ENCODE measurements at regions of chr19 and their contacts with region 1.

Region 1: GRCh38 chr19:41883821-41884733 is 1.1 kb downstream of the ARHGEF1 start:
- DNase-seq: peak; percentile 95
- ATAC-seq: peak; percentile 78
- H3K4me3 ChIP-seq: peak overlapping the region; percentile 83 to 100 (median 97)
- H3K4me3 Mint-ChIP-seq: peak overlapping the region; percentile 93
- H3K27ac ChIP-seq: peak overlapping the region; percentile 72 to 87
- H3K27ac Mint-ChIP-seq: peak overlapping the region; percentile 98
- H3K4me1 ChIP-seq: peaks cover 72 to 83% of the 10 kb centered on the region in 2 donors
- H3K4me1 Mint-ChIP-seq: peaks cover 78% of the 10 kb centered on the region
- H3K27me3 ChIP-seq: no peaks in the 10 kb centered on the region
- H3K27me3 Mint-ChIP-seq: no peaks in the 10 kb centered on the region
- CTCF ChIP-seq: no peak

Region 2: DNA sequence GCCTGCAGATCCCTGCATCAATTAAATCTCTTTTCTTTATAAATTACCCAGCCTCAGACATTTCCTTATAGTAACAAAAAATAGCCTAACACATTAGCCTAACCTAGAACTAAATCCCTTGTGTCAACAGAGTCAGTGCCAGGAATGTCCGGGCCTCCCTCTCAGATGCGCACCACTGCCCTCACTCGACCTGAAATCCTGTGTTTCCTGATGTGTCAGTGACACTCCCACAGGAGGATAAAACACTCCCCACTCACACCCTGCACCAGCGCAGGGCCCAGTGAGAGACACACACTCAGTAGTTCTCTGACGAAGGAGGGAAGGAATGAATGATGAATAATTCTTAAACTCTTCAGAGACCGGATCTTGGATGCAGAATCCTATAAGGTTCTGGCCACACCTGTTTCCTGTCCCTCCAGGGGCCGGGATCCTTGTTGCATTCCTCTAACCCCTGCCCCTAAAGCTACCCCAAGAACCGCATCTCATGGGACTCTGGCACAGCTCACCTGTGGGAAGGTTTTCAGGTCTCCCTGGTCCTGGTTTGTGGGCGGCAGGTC is 84.6 kb before region 1 on chr19:
- CTCF ChIA-PET with region 1: no interaction called
- POLR2A ChIA-PET with region 1: no interaction called
- intact Hi-C with region 1: no loop called
- DNase-seq: no peak
- ATAC-seq: no peak
- H3K4me3 ChIP-seq: peak overlapping the region in 1 of 5 experiments; percentile 21
- H3K4me3 Mint-ChIP-seq: no peak overlapping the region
- H3K27ac ChIP-seq: no peak overlapping the region
- H3K27ac Mint-ChIP-seq: peak overlapping the region; percentile 50
- H3K4me1 ChIP-seq: peaks cover 30 to 34% of the 10 kb centered on the region in 2 donors
- H3K4me1 Mint-ChIP-seq: peaks cover 35% of the 10 kb centered on the region
- H3K27me3 ChIP-seq: peaks cover 0 to 3% (median 0%) of the 10 kb centered on the region in 4 experiments
- H3K27me3 Mint-ChIP-seq: peaks cover 3% of the 10 kb centered on the region
- CTCF ChIP-seq: no peak

Region 3: GRCh38 chr19:41866284-41866683 is 17.8 kb before region 1 on chr19:
- CTCF ChIA-PET with region 1: interaction called, 180 read pairs
- POLR2A ChIA-PET with region 1: interaction called, 85 read pairs
- intact Hi-C with region 1: no loop called
- DNase-seq: no peak
- ATAC-seq: no peak
- H3K4me3 ChIP-seq: no peak overlapping the region
- H3K4me3 Mint-ChIP-seq: no peak overlapping the region
- H3K27ac ChIP-seq: peak overlapping the region in 1 of 2 donors; percentile 26
- H3K27ac Mint-ChIP-seq: peak overlapping the region; percentile 76
- H3K4me1 ChIP-seq: peaks cover 46 to 88% of the 10 kb centered on the region in 2 donors
- H3K4me1 Mint-ChIP-seq: peaks cover 71% of the 10 kb centered on the region
- H3K27me3 ChIP-seq: no peaks in the 10 kb centered on the region
- H3K27me3 Mint-ChIP-seq: no peaks in the 10 kb centered on the region
- CTCF ChIP-seq: no peak

Region 4: DNA sequence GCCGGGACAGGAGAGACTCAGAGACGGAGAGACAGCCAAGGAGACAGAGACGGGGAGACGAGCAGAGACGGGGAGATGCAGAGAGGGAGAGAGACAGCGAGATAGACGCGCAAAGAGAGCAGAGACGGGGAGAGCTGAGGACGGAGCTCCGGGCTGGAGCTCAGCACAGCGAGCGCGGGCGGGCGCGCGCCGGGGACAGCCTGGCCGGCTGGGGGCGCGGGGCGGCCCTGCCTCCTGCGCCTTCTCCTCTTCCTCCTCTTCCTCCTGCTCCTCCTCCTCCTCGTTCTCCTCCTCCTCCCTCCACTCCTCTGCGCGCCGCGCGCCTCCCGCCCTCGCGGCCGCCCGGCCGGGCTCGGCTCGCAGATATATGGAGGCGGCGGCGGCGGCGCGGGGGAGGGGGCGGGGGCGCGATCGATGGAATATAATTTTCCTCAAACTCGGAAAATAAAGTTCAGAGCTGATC is 44.2 kb after region 1 on chr19 and contains the start of gene ERFL:
- CTCF ChIA-PET with region 1: interaction called, 14 read pairs
- POLR2A ChIA-PET with region 1: interaction called, 4 read pairs
- intact Hi-C with region 1: no loop called
- DNase-seq: peak; percentile 59
- ATAC-seq: peak; percentile 31
- H3K4me3 ChIP-seq: peak within 1 kb of the TSS; percentile 49 to 72 (median 60)
- H3K4me3 Mint-ChIP-seq: no peak within 1 kb of the TSS
- H3K27ac ChIP-seq: peak within 1 kb of the TSS; percentile 18 to 56
- H3K27ac Mint-ChIP-seq: peak within 1 kb of the TSS; percentile 87
- H3K4me1 ChIP-seq: peaks cover 52 to 60% of the 10 kb centered on the region in 2 donors
- H3K4me1 Mint-ChIP-seq: peaks cover 32% of the 10 kb centered on the region
- H3K27me3 ChIP-seq: peaks cover 0 to 36% (median 7%) of the 10 kb centered on the region in 4 experiments
- H3K27me3 Mint-ChIP-seq: peaks cover 7% of the 10 kb centered on the region
- CTCF ChIP-seq: no peak
- total RNA-seq, gene ERFL: 2.3 and 2.4 TPM in 2 replicates

Region 5: DNA sequence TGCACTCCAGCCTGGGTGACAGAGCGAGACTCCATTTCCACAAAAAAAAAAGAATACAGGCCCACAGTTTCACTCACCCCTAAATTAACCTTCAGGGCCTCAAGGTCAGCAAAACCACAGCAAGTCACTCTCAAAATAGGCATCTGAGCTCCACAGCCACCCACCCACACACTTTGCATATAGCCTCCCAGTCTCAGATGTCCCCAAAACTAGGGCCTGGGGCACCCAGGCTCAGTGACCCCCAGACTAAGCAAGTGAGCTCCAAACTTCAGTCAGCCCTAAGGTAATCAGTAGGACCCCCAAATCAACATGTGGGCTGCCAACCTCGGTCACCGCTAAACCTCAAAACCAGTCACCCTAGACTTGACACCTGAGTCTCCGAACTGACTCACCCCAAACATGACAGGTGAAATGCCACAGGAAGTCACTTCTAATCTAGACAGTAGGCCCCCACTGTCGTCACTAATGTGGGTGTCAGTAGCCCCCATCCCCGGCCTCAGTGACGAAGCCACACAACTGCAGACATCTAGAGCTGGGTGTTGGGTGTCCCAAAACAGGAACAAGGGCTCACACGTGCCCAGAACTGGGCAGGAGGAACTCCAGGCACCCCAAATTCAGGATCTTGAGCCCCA is 61.2 kb after region 1 on chr19:
- CTCF ChIA-PET with region 1: interaction called, 40 read pairs
- POLR2A ChIA-PET with region 1: interaction called, 22 read pairs
- intact Hi-C with region 1: loop called (anchors 1 kb)
- DNase-seq: peak; percentile 97
- ATAC-seq: peak; percentile 87
- H3K4me3 ChIP-seq: peak overlapping the region in 1 of 5 experiments; percentile 23
- H3K4me3 Mint-ChIP-seq: peak overlapping the region; percentile 81
- H3K27ac ChIP-seq: peak overlapping the region; percentile 94 to 96
- H3K27ac Mint-ChIP-seq: peak overlapping the region; percentile 100
- H3K4me1 ChIP-seq: peaks cover 57 to 71% of the 10 kb centered on the region in 2 donors
- H3K4me1 Mint-ChIP-seq: peaks cover 71% of the 10 kb centered on the region
- H3K27me3 ChIP-seq: no peaks in the 10 kb centered on the region
- H3K27me3 Mint-ChIP-seq: no peaks in the 10 kb centered on the region
- CTCF ChIP-seq: no peak

Region 6: GRCh38 chr19:41951686-41952172 is 67.7 kb after region 1 on chr19:
- CTCF ChIA-PET with region 1: interaction called, 40 read pairs
- POLR2A ChIA-PET with region 1: interaction called, 21 read pairs
- intact Hi-C with region 1: no loop called
- DNase-seq: peak; percentile 88
- ATAC-seq: peak; percentile 94
- H3K4me3 ChIP-seq: no peak overlapping the region
- H3K4me3 Mint-ChIP-seq: no peak overlapping the region
- H3K27ac ChIP-seq: no peak overlapping the region
- H3K27ac Mint-ChIP-seq: peak overlapping the region; percentile 74
- H3K4me1 ChIP-seq: peaks cover 14 to 23% of the 10 kb centered on the region in 2 donors
- H3K4me1 Mint-ChIP-seq: peaks cover 33% of the 10 kb centered on the region
- H3K27me3 ChIP-seq: no peaks in the 10 kb centered on the region
- H3K27me3 Mint-ChIP-seq: no peaks in the 10 kb centered on the region
- CTCF ChIP-seq: peak; percentile 99

Region 7: GRCh38 chr19:42075616-42076379 is 191.7 kb after region 1 on chr19 and contains the start of gene ZNF574:
- CTCF ChIA-PET with region 1: no interaction called
- POLR2A ChIA-PET with region 1: no interaction called
- intact Hi-C with region 1: loop called (anchors 5 kb)
- DNase-seq: peak; percentile 100
- ATAC-seq: peak; percentile 94
- H3K4me3 ChIP-seq: peak within 1 kb of the TSS; percentile 56 to 93 (median 86)
- H3K4me3 Mint-ChIP-seq: peak within 1 kb of the TSS; percentile 97
- H3K27ac ChIP-seq: peak within 1 kb of the TSS; percentile 95 to 99
- H3K27ac Mint-ChIP-seq: peak within 1 kb of the TSS; percentile 99
- H3K4me1 ChIP-seq: peaks cover 20 to 23% of the 10 kb centered on the region in 2 donors
- H3K4me1 Mint-ChIP-seq: peaks cover 35% of the 10 kb centered on the region
- H3K27me3 ChIP-seq: no peaks in the 10 kb centered on the region
- H3K27me3 Mint-ChIP-seq: peaks cover 5% of the 10 kb centered on the region
- CTCF ChIP-seq: no peak
- total RNA-seq, gene ZNF574: 27.4 and 28.4 TPM in 2 replicates

Measured in B cell (primary cell).